ENCODE measurements at regions of chr1 and their contacts with region 1.

Region 1: DNA sequence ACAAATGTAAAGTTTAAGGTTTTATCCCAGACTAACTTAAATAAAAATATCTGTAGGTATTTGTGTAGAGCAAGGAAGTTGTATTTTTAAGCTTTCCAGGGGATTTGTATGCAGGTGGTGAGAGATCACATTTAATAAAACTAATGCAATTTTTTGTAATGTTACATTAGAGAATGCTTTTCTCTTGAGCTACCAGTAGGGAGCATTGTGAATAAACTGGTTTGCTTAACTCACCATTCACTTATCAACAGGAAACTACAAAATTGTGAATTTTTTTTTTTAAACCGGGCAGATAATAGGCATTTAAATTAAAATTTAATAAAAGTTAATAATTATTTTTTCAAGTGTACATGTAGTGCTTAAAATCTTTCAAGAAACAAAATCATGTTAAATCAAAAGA is 78.6 kb downstream of the IVNS1ABP start:
- DNase-seq: peak; percentile 29
- ATAC-seq: no peak
- H3K4me3 ChIP-seq: no peak overlapping the region
- H3K27ac ChIP-seq: no peak overlapping the region
- H3K4me1 ChIP-seq: no peaks in the 10 kb centered on the region
- H3K27me3 ChIP-seq: no peaks in the 10 kb centered on the region
- CTCF ChIP-seq: peak; percentile 53

Region 2: GRCh38 chr1:185291652-185292051 is 53.2 kb after region 1 on chr1:
- CTCF ChIA-PET with region 1: no interaction called
- POLR2A ChIA-PET with region 1: no interaction called
- intact Hi-C with region 1: loop called (anchors 5 kb)
- DNase-seq: no peak
- ATAC-seq: no peak
- H3K4me3 ChIP-seq: no peak overlapping the region
- H3K27ac ChIP-seq: no peak overlapping the region
- H3K4me1 ChIP-seq: no peaks in the 10 kb centered on the region
- H3K27me3 ChIP-seq: no peaks in the 10 kb centered on the region
- CTCF ChIP-seq: no peak

Region 3: GRCh38 chr1:185595835-185596667 is 357.6 kb after region 1 on chr1:
- CTCF ChIA-PET with region 1: interaction called, 4 read pairs
- POLR2A ChIA-PET with region 1: no interaction called
- intact Hi-C with region 1: loop called (anchors 10 kb)
- DNase-seq: peak; percentile 64
- ATAC-seq: peak; percentile 60
- H3K4me3 ChIP-seq: no peak overlapping the region
- H3K27ac ChIP-seq: no peak overlapping the region
- H3K4me1 ChIP-seq: peaks cover 4% of the 10 kb centered on the region; the same call in 1 of the 2 replicates
- H3K27me3 ChIP-seq: no peaks in the 10 kb centered on the region
- CTCF ChIP-seq: peak; percentile 78

Region 4: GRCh38 chr1:185670187-185670627 is 431.8 kb after region 1 on chr1:
- CTCF ChIA-PET with region 1: no interaction called
- POLR2A ChIA-PET with region 1: no interaction called
- intact Hi-C with region 1: loop called (anchors 2 kb)
- DNase-seq: peak; percentile 54
- ATAC-seq: 0 out of 2 replicates have a peak, but pooled peaks have one; percentile 35
- H3K4me3 ChIP-seq: no peak overlapping the region
- H3K27ac ChIP-seq: no peak overlapping the region
- H3K4me1 ChIP-seq: peaks cover 6% of the 10 kb centered on the region; the same call in 1 of the 2 replicates
- H3K27me3 ChIP-seq: no peaks in the 10 kb centered on the region
- CTCF ChIP-seq: peak; percentile 68